ENCODE measurements at regions of chr10 and their contacts with region 1.

Region 1: DNA sequence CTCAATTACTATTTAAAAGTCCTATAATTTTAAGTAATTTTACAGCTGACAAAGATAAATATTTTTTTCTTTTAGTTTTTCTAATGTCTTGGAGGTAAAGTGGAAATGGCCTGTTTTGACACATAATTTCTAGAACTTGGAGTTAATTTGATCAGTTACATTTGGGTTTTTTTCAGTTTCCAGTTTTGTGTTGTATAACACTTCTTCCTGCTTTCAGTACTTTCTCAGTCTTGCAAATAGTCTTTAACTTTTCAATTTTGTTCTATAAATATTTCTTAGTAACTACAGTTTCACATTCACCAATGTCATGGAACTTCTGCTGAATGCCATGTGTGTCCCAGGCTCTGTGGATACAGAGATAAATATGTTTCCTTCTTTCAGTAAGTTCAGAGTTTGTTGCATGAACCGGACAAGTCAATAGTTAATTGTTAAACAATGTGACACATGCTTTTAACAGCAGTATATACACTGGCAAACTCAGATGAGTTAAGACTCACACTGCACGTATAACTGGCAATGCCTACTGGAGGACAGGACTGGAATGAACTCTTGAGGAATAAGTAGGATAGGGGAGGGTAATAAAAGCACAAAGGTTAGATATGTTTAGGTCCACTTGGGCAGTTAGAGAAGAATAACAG is 4.6 kb downstream of the SHOC2 start:
- DNase-seq: no peak
- ATAC-seq: no peak
- H3K4me3 Mint-ChIP-seq: peak overlapping the region; percentile 24
- H3K27ac Mint-ChIP-seq: peak overlapping the region; percentile 9
- H3K4me1 Mint-ChIP-seq: peaks cover 61% of the 10 kb centered on the region
- H3K27me3 Mint-ChIP-seq: no peaks in the 10 kb centered on the region
- CTCF ChIP-seq: no peak

Region 2: GRCh38 chr10:110113670-110114337 is 810.2 kb before region 1 on chr10:
- CTCF ChIA-PET with region 1: no interaction called
- POLR2A ChIA-PET with region 1: interaction called, 10 read pairs
- intact Hi-C with region 1: no loop called
- DNase-seq: no peak
- ATAC-seq: no peak
- H3K4me3 Mint-ChIP-seq: no peak overlapping the region
- H3K27ac Mint-ChIP-seq: no peak overlapping the region
- H3K4me1 Mint-ChIP-seq: peaks cover 16% of the 10 kb centered on the region
- H3K27me3 Mint-ChIP-seq: no peaks in the 10 kb centered on the region
- CTCF ChIP-seq: no peak

Region 3: DNA sequence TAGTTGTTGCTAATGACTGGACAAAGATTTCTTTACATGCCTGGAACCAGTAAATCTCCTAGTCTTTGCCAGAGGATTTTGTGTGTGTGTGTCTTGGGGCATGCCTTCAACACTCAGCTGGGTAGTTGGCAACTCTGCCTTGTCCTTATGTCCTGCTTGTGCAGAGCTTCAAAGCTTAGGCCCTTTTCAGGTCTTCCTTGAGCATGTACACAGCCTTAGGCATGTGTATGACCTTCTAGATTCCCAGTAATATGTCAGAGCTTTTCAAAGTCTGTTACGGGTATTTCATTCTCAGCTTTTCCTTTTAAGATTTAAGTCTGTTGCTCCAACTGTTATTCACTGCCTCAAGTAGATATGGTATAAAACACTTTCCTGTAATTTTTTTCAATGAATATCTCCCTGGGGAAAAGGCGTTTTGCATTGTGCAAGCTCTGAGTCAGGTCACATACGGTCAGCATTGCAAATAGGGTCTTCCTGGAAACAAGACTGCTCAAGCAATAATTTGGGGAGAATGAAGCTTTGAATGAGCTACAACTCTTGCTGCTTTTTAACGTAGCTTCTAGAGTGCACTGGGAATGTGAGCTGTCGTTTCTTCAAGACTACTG is 20.9 kb after region 1 on chr10:
- CTCF ChIA-PET with region 1: no interaction called
- POLR2A ChIA-PET with region 1: interaction called, 6 read pairs
- intact Hi-C with region 1: loop called (anchors 2 kb)
- DNase-seq: no peak
- ATAC-seq: peak; percentile 56
- H3K4me3 Mint-ChIP-seq: peak overlapping the region; percentile 25
- H3K27ac Mint-ChIP-seq: no peak overlapping the region
- H3K4me1 Mint-ChIP-seq: peaks cover 73% of the 10 kb centered on the region
- H3K27me3 Mint-ChIP-seq: no peaks in the 10 kb centered on the region
- CTCF ChIP-seq: no peak

Measured in activated B cell treated with CpG ODN at 0.5 μM for 24 hours (primary cell).